ENCODE measurements at regions of chr22 and their contacts with region 1.

Region 1: DNA sequence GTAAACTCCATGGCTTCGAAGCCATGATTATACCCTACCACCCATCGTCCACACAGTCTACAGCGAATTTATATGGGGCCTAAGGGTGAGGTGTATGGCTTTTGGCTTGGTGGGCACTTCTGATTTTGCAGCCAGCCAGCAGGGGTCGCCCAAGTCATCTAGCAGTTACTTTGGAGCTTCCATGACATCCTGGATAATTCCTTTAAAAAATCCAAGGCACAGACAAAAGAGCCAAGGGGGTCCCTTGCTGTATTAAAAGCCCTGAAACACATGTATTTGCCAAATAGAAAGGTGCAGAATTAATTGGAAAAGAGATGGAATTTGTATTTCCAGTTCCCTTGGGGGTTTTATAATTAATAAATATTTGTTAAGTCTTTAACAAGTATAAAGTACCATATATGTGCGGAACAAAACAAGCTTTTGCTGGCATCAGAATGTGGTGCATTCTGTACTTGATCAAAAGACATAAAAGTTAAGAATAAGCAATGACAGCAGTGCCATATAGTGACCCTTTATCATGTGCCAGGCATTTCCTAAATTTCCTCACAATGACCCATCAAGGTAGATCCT is 132.8 kb upstream of the PITPNB start:
- DNase-seq: peak; percentile 31 to 93 (median 80)

Region 2: DNA sequence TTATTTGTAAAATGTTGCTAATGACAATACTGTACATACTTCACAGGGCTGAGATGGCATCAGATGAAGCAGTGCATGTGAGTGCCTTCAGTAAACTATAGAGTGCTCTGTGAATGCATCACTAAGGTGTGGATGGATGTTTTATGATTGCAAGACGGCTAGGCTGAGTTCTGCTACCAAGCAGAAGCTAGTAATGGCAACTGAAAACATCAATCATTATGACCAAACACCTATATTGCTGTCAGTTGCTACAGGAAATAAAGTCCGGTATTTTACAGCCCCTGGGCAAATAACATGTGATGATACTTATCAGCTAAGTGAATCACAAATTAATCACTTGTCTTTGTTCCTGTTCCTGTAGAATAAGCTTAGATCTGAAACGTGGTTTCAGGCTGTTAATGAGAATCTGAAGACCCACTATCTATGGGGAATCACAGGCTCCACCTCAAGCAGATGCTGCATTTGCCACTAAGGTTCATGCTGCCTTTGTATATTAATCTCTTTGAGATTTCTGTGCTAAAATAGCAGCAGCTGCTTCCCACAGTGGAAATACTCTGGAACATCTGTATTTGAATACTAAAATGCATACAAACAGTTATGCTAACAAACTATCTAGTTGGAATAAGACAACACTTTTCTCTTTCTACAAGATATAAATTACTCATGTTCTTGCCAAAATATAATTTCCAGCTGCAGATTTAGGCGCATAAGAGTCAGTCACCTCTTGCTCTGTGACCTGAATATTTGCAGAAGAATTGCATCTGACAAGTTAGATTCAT is 121.2 kb after region 1 on chr22:
- intact Hi-C with region 1: no loop called
- DNase-seq: no peak

Region 3: GRCh38 chr22:28442264-28442710 is 390.4 kb after region 1 on chr22:
- intact Hi-C with region 1: loop called (anchors 10 kb)
- DNase-seq: peak; percentile 70 to 93 (median 85)

Region 4: DNA sequence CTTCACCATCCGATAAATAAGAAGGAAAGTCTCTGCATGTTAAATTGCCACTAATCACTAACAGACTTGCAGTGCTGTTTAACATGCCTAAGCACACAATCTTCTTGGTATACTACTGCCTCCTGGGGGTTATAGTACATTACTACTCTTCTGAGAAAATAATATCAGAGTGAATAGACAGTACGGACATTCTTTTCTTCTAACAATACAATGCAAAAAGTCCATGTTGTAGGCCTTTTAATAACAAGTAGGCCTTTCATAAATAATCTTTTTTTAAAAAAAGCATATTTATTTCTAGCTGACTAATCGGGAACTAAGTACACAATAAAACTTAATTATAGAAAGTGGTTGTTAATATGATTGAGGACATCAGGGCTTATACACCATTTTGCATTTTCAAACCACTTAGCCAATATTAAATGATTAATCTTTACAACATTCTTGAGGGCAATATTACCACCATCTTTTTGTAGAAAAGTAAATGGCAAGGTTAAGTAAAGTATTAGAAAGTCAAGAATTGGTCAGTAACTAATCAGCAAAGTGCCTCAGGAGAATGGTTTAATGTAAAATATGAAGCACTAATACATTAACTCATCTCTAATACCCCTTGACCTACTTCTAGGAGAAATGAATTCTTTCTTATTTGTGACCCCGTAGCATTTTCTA is 543.1 kb after region 1 on chr22:
- intact Hi-C with region 1: loop called (anchors 5 kb)
- DNase-seq: peak in 4 of 42 donors; percentile 11 to 43 (median 18)

Measured in head of caudate nucleus (tissue), 42 donors.